Natural killer cell (primary cell): ENCODE measurements at regions of chr5 and their contacts with region 1.

Region 1: DNA sequence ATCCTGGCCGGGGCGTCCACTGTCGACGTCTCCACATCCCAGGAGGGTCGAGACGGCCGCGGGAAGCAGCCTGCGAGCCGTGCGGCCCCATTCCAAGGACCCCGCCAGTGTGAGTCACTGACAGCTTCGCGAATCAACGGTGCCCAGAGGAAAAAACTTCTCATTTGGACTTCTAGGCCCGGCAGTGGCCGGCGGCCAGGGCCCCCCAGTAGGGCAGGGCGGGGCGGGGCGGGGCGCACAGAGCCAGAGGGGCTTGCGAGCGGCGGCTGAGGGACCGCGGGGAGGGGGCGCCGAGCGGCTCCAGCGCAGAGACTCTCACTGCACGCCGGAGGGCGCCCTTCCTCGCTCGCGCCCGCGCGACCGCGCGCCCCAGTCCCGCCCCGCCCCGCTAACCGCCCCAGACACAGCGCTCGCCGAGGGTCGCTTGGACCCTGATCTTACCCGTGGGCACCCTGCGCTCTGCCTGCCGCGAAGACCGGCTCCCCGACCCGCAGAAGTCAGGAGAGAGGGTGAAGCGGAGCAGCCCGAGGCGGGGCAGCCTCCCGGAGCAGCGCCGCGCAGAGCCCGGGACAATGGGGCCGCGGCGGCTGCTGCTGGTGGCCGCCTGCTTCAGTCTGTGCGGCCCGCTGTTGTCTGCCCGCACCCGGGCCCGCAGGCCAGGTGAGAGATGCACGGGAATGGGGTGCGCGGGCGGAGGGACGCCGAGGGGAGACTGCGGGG is at the start of gene F2R:
- DNase-seq: peak; percentile 66 to 81
- ATAC-seq: peak; percentile 76 to 89 (median 89)
- H3K4me3 ChIP-seq: peak within 1 kb of the TSS; percentile 84
- H3K4me3 Mint-ChIP-seq: peak within 1 kb of the TSS; percentile 96
- H3K27ac ChIP-seq: peak within 1 kb of the TSS; percentile 10
- H3K27ac Mint-ChIP-seq: peak within 1 kb of the TSS; percentile 88 to 92
- H3K4me1 ChIP-seq: peaks cover 51% of the 10 kb centered on the region
- H3K4me1 Mint-ChIP-seq: peaks cover 36 to 51% of the 10 kb centered on the region in 2 donors
- H3K27me3 ChIP-seq: peaks cover 5% of the 10 kb centered on the region
- H3K27me3 Mint-ChIP-seq: no peaks in the 10 kb centered on the region
- CTCF ChIP-seq: peak; percentile 80
- total RNA-seq, gene F2R: 43.2 to 53.9 (median 50.1) TPM

Region 2: GRCh38 chr5:76601470-76601869 is 114.4 kb before region 1 on chr5:
- intact Hi-C with region 1: loop called (anchors 10 kb)
- DNase-seq: peak in 1 of 2 donors; percentile 76
- ATAC-seq: peak; percentile 64 to 87 (median 80)
- H3K4me3 ChIP-seq: no peak overlapping the region
- H3K4me3 Mint-ChIP-seq: no peak overlapping the region
- H3K27ac ChIP-seq: no peak overlapping the region
- H3K27ac Mint-ChIP-seq: peak overlapping the region; percentile 42 to 67
- H3K4me1 ChIP-seq: peaks cover 10% of the 10 kb centered on the region
- H3K4me1 Mint-ChIP-seq: peaks cover 40 to 49% of the 10 kb centered on the region in 2 donors
- H3K27me3 ChIP-seq: no peaks in the 10 kb centered on the region
- H3K27me3 Mint-ChIP-seq: no peaks in the 10 kb centered on the region
- CTCF ChIP-seq: peak; percentile 83

Region 3: DNA sequence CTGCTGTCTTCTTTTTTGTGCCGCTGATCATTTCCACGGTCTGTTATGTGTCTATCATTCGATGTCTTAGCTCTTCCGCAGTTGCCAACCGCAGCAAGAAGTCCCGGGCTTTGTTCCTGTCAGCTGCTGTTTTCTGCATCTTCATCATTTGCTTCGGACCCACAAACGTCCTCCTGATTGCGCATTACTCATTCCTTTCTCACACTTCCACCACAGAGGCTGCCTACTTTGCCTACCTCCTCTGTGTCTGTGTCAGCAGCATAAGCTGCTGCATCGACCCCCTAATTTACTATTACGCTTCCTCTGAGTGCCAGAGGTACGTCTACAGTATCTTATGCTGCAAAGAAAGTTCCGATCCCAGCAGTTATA is 17.1 kb after region 1 on chr5:
- intact Hi-C with region 1: loop called (anchors 1 kb)
- DNase-seq: peak; percentile 54 to 87
- ATAC-seq: peak; percentile 74 to 85 (median 83)
- H3K4me3 ChIP-seq: peak overlapping the region; percentile 9
- H3K4me3 Mint-ChIP-seq: peak overlapping the region; percentile 72
- H3K27ac ChIP-seq: peak overlapping the region; percentile 82
- H3K27ac Mint-ChIP-seq: peak overlapping the region; percentile 90 to 95
- H3K4me1 ChIP-seq: peaks cover 38% of the 10 kb centered on the region
- H3K4me1 Mint-ChIP-seq: peaks cover 62 to 63% of the 10 kb centered on the region in 2 donors
- H3K27me3 ChIP-seq: no peaks in the 10 kb centered on the region
- H3K27me3 Mint-ChIP-seq: no peaks in the 10 kb centered on the region
- CTCF ChIP-seq: no peak

Region 4: GRCh38 chr5:76771705-76772405 is 56.0 kb after region 1 on chr5:
- intact Hi-C with region 1: loop called (anchors 1 kb)
- DNase-seq: no peak
- ATAC-seq: no peak
- H3K4me3 ChIP-seq: no peak overlapping the region
- H3K4me3 Mint-ChIP-seq: no peak overlapping the region
- H3K27ac ChIP-seq: no peak overlapping the region
- H3K27ac Mint-ChIP-seq: no peak overlapping the region
- H3K4me1 ChIP-seq: no peaks in the 10 kb centered on the region
- H3K4me1 Mint-ChIP-seq: no peaks in the 10 kb centered on the region
- H3K27me3 ChIP-seq: no peaks in the 10 kb centered on the region
- H3K27me3 Mint-ChIP-seq: no peaks in the 10 kb centered on the region
- CTCF ChIP-seq: no peak